CD8-positive, alpha-beta T cell (primary cell): ENCODE measurements at regions of chr17 and their contacts with region 1.

Region 1: DNA sequence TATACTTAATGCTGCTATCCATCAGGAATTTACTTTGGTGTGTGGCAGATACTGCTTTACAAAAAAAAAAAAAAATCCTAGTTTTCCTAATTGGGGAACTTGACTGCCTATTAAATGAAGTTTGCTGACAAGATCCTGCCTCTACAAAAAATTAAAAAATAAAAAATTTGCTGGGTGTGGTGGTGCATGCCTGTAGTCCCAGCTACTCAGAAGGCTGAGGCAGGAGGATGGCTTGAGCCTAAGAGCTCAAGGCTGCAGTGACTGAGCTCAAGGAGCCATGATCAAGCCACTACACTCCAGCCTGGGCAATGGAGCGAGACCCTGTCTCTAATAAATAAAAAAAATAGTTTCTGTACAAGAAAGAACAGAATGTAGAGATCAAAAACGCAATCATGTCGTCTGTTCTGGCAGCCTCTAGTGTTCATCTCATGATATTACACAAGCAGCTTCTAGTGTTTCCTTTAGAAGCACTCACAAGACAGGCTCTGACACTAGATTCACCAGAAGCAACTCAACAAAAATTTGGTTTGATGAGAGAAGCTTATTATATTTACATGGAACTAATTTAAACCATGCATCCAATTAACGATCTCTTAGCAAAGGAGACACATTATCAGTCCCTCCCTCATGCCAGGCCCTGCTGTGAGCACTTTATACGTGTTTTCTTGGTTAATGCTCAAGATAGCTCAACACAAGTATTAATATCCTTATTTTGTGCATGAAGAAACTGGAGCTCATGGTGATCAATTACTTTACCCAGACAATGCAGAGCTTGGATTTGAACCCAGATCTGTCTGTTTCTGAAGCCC is 6.8 kb upstream of the KRTAP17-1 start:
- DNase-seq: peak in 4 of 9 experiments; percentile 29 to 75 (median 56)
- ATAC-seq: peak; percentile 86
- H3K4me3 ChIP-seq: no peak overlapping the region
- H3K4me3 Mint-ChIP-seq: no peak overlapping the region
- H3K27ac ChIP-seq: no peak overlapping the region
- H3K27ac Mint-ChIP-seq: peak overlapping the region; percentile 62
- H3K4me1 ChIP-seq: peaks cover 51% of the 10 kb centered on the region
- H3K4me1 Mint-ChIP-seq: peaks cover 47% of the 10 kb centered on the region
- H3K27me3 ChIP-seq: no peaks in the 10 kb centered on the region
- H3K27me3 Mint-ChIP-seq: no peaks in the 10 kb centered on the region
- CTCF ChIP-seq: peak; percentile 86

Region 2: DNA sequence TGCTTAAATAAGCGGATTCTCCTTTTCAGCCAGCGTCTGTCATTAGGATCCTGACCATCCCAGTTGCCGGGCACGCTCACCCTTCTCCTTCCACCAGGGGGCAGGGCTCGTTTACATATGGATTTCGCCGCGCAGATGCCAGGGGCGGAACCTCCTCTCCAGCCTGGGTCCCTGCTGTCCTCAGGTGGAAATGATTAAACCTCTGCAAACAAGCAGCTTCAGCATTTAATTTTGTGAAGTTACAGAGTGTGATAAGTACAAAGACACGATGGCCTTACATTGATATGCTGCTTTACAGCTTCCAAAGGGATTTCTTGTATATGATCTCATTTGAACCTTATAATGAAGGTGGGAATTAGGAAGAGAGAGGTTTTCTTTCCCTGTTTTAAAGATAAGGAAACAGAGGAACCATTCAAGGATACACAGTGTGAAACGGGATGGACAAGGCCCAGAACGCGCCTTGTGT is 518.6 kb before region 1 on chr17:
- CTCF ChIA-PET with region 1: interaction called, 5 read pairs
- POLR2A ChIA-PET with region 1: no interaction called
- intact Hi-C with region 1: loop called in 1 of 2 experiments (anchors 1 kb)
- DNase-seq: peak; percentile 50 to 82 (median 75)
- ATAC-seq: peak; percentile 92
- H3K4me3 ChIP-seq: no peak overlapping the region
- H3K4me3 Mint-ChIP-seq: no peak overlapping the region
- H3K27ac ChIP-seq: no peak overlapping the region
- H3K27ac Mint-ChIP-seq: no peak overlapping the region
- H3K4me1 ChIP-seq: no peaks in the 10 kb centered on the region
- H3K4me1 Mint-ChIP-seq: peaks cover 4% of the 10 kb centered on the region
- H3K27me3 ChIP-seq: peaks cover 0 to 4% of the 10 kb centered on the region in 2 experiments
- H3K27me3 Mint-ChIP-seq: peaks cover 44% of the 10 kb centered on the region
- CTCF ChIP-seq: peak; percentile 94

Region 3: DNA sequence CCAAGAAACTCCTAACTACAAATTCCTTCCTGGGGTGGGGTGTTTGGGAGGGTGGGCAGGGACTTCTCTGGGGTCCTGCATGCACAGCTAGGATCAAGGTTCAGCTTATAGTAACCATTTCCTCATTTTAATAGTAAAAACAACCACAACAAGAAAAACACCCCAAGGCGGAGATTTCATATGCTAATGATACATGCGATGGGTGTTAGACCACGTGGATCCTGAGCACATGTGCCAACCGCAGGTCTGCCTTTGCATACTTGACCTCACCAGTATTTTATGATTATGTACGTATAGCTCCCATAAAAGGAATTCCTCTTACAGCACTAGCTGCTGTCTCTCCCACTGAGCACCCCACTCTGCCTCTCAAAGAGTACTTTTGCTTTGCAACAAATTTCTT is 206.0 kb before region 1 on chr17:
- CTCF ChIA-PET with region 1: interaction called, 11 read pairs
- POLR2A ChIA-PET with region 1: no interaction called
- intact Hi-C with region 1: loop called (anchors 1 to 2 kb)
- DNase-seq: peak in 1 of 9 experiments; percentile 25
- ATAC-seq: peak; percentile 26
- H3K4me3 ChIP-seq: no peak overlapping the region
- H3K4me3 Mint-ChIP-seq: no peak overlapping the region
- H3K27ac ChIP-seq: no peak overlapping the region
- H3K27ac Mint-ChIP-seq: no peak overlapping the region
- H3K4me1 ChIP-seq: peaks cover 16% of the 10 kb centered on the region
- H3K4me1 Mint-ChIP-seq: peaks cover 35% of the 10 kb centered on the region
- H3K27me3 ChIP-seq: no peaks in the 10 kb centered on the region
- H3K27me3 Mint-ChIP-seq: peaks cover 6% of the 10 kb centered on the region
- CTCF ChIP-seq: no peak

Region 4: GRCh38 chr17:41308251-41308917 is 13.9 kb before region 1 on chr17:
- CTCF ChIA-PET with region 1: interaction called, 43 read pairs
- POLR2A ChIA-PET with region 1: interaction called, 10 read pairs
- intact Hi-C with region 1: loop called in 1 of 2 experiments (anchors 1 kb)
- DNase-seq: peak; percentile 75 to 95 (median 84)
- ATAC-seq: peak; percentile 82
- H3K4me3 ChIP-seq: peak overlapping the region; percentile 4 to 25
- H3K4me3 Mint-ChIP-seq: peak overlapping the region; percentile 56
- H3K27ac ChIP-seq: peak overlapping the region; percentile 79 to 80
- H3K27ac Mint-ChIP-seq: peak overlapping the region; percentile 98
- H3K4me1 ChIP-seq: peaks cover 48% of the 10 kb centered on the region
- H3K4me1 Mint-ChIP-seq: peaks cover 62% of the 10 kb centered on the region
- H3K27me3 ChIP-seq: no peaks in the 10 kb centered on the region
- H3K27me3 Mint-ChIP-seq: no peaks in the 10 kb centered on the region
- CTCF ChIP-seq: no peak

Region 5: GRCh38 chr17:41347869-41348773 is 25.8 kb after region 1 on chr17:
- CTCF ChIA-PET with region 1: interaction called, 10 read pairs
- POLR2A ChIA-PET with region 1: no interaction called
- intact Hi-C with region 1: no loop called
- DNase-seq: no peak
- ATAC-seq: no peak
- H3K4me3 ChIP-seq: no peak overlapping the region
- H3K4me3 Mint-ChIP-seq: no peak overlapping the region
- H3K27ac ChIP-seq: no peak overlapping the region
- H3K27ac Mint-ChIP-seq: no peak overlapping the region
- H3K4me1 ChIP-seq: peaks cover 7% of the 10 kb centered on the region
- H3K4me1 Mint-ChIP-seq: peaks cover 18% of the 10 kb centered on the region
- H3K27me3 ChIP-seq: no peaks in the 10 kb centered on the region
- H3K27me3 Mint-ChIP-seq: peaks cover 4% of the 10 kb centered on the region
- CTCF ChIP-seq: no peak